ENCODE measurements at regions of chr3 and their contacts with region 1.

Region 1: DNA sequence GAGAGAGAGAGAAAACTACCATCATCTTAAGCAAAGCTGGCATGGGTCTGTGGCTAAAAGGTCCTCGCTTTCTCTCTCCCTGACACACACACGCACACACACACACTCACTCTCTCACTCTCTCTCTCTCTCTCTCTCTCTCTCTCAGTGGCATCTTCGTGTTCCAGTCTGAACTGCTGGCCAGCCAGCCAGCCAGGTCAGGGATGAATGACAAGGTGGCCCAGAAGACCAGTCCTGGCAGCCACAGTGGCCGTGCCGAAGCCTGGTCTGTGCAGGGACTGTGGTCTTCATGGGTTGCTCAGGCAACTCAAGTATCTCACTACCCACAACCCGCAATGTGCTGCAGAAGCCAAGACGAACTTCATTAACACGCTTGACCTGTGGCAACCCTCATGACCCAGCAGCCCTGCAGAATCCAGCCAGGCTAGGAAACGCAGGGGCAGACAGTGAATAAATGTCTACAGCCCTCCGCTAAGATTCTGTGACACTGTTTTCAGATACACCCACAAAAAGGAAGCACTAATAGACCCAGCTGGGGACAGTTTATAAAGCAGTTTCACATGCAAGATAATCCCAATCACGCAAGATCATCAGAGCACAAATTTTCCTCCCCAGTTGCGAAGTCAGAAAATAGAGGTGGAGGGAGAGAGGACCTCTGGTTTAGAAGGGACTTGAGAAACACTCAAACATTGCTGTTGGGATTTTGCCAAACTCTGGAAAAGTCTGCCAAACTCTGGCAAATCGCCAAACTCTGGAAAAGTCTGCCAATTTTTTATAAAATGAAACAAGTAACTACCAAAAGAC is 66.4 kb downstream of the XXYLT1 start:
- DNase-seq: peak; percentile 38
- ATAC-seq: peak; percentile 66
- H3K4me3 ChIP-seq: no peak overlapping the region
- H3K27ac ChIP-seq: peak overlapping the region; percentile 15
- H3K4me1 ChIP-seq: peaks cover 43% of the 10 kb centered on the region
- H3K27me3 ChIP-seq: no peaks in the 10 kb centered on the region
- CTCF ChIP-seq: no peak
- EP300 ChIP-seq: no peak
- POLR2A ChIP-seq: no peak
- RAD21 ChIP-seq: no peak

Region 2: DNA sequence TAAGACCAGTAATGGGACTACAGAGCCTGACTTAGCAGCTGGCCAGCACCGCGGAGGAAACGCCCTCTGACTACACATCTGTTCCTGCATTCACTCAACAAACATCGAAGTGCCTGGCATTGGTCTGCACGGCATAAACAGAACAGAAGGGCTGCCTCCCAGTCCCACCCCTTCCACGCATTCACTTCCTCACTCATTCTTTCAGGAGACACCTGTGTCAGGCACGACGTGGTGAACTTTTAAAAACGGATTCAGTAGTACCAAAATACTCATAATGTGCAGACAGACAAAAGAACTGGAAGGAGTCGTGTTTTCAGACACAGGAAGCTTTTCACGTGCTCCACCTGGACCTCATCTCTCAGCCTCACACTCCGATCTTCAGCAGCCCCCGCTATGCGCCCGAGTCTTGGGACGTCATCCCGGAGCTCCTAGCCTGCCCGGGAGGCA is 56.9 kb before region 1 on chr3:
- CTCF ChIA-PET with region 1: interaction called, 5 read pairs
- POLR2A ChIA-PET with region 1: interaction called, 13 read pairs
- RAD21 ChIA-PET with region 1: interaction called, 17 read pairs
- SMC1A ChIA-PET with region 1: interaction called, 19 read pairs
- in situ Hi-C with region 1: no loop called
- intact Hi-C with region 1: loop called (anchors 1 kb)
- DNase-seq: peak; percentile 91
- ATAC-seq: peak; percentile 83
- H3K4me3 ChIP-seq: peak overlapping the region; percentile 93
- H3K27ac ChIP-seq: peak overlapping the region; percentile 91
- H3K4me1 ChIP-seq: peaks cover 46% of the 10 kb centered on the region
- H3K27me3 ChIP-seq: no peaks in the 10 kb centered on the region
- CTCF ChIP-seq: no peak
- EP300 ChIP-seq: no peak
- POLR2A ChIP-seq: peak; percentile 79
- RAD21 ChIP-seq: no peak

Region 3: DNA sequence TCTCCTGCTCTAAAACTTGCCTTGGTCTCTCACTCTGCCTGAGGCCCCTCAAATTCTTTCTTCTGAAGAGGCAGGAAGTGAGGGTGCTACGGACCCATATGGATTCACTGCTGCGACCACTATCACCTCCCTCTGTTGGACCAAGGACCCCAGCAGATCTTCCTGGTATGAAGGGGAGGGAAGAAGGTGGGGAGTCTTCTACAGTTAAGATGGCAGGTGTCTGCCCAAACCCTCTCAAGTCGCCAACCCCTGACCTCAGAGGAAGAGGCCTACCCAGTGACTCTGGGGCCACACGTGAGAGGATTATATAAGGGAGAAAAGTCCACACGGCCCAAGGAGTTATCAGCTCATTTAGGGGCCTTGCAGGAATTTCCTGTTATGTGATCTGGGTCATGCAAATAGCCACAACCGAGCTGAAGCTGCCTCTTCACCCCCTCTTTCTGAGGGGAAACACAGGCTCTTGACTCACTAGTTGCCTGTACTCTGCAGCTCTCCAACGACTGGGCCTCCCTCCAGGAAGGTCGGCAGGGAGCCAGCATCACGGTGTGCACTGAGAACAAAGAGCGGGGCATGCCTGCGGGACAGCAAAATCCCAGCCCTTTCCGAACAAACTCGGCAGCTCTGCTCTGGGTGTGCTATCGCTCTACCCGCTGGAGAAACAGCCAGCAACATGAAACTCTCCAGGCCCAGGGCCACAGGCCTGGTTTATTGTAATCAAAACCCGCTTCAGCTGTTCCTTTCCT is 49.6 kb before region 1 on chr3:
- CTCF ChIA-PET with region 1: interaction called, 5 read pairs
- POLR2A ChIA-PET with region 1: interaction called, 13 read pairs
- RAD21 ChIA-PET with region 1: interaction called, 17 read pairs
- SMC1A ChIA-PET with region 1: interaction called, 13 read pairs
- in situ Hi-C with region 1: no loop called
- intact Hi-C with region 1: loop called (anchors 1 kb)
- DNase-seq: no peak
- ATAC-seq: peak; percentile 7; the same call in 1 of the 3 replicates
- H3K4me3 ChIP-seq: 0 out of 2 replicates have a peak overlapping the region, but pooled peaks have one; percentile 12
- H3K27ac ChIP-seq: peak overlapping the region; percentile 73
- H3K4me1 ChIP-seq: peaks cover 44% of the 10 kb centered on the region
- H3K27me3 ChIP-seq: no peaks in the 10 kb centered on the region
- CTCF ChIP-seq: no peak
- EP300 ChIP-seq: no peak
- POLR2A ChIP-seq: peak; percentile 54
- RAD21 ChIP-seq: peak; percentile 8; the same call in 1 of the 2 replicates

Region 4: GRCh38 chr3:195187609-195188425 is 16.7 kb before region 1 on chr3:
- CTCF ChIA-PET with region 1: interaction called, 4 read pairs
- POLR2A ChIA-PET with region 1: interaction called, 8 read pairs
- RAD21 ChIA-PET with region 1: interaction called, 7 read pairs
- SMC1A ChIA-PET with region 1: interaction called, 24 read pairs
- in situ Hi-C with region 1: no loop called
- intact Hi-C with region 1: no loop called
- DNase-seq: no peak
- ATAC-seq: no peak
- H3K4me3 ChIP-seq: no peak overlapping the region
- H3K27ac ChIP-seq: no peak overlapping the region
- H3K4me1 ChIP-seq: peaks cover 6% of the 10 kb centered on the region
- H3K27me3 ChIP-seq: no peaks in the 10 kb centered on the region
- CTCF ChIP-seq: no peak
- EP300 ChIP-seq: no peak
- POLR2A ChIP-seq: no peak
- RAD21 ChIP-seq: no peak

Region 5: DNA sequence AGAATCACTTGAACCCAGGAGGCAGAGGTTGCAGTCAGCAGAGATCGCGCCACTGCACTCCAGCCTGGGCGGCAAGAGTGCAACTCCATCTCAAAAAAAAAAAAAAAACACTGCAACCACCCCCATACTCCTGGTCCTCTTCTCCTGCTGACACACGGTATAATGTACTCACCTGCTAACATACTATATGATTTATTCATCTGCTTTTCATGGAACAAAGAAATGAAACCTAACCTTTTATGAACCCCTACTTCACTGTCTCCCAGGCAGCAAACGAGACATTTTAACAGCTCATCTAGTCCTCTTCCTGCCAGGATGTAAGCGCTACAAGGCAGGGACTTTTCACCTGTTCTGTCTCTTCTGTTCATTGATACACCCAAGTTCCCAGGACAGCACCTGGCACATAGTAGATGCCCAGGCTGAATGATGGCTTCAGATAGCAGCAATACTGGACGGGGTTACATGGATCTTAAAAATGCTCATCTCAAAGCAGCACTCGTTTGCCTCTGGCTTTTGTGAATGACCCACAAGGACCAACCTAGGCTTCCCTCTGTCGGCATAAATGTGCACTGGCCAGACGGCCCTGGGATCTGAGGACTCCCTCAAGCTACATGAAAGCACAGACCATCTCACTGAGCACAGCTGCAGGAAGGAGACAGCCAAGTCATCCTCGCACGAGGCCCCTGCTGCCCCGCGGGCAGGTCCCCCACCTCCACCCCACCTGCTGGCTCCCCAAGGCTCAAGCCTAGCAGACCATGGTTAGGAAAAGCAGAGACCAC is 46.1 kb after region 1 on chr3:
- CTCF ChIA-PET with region 1: interaction called, 6 read pairs
- POLR2A ChIA-PET with region 1: interaction called, 8 read pairs
- RAD21 ChIA-PET with region 1: interaction called, 42 read pairs
- SMC1A ChIA-PET with region 1: interaction called, 32 read pairs
- in situ Hi-C with region 1: no loop called
- intact Hi-C with region 1: no loop called
- DNase-seq: no peak
- ATAC-seq: peak; percentile 76
- H3K4me3 ChIP-seq: no peak overlapping the region
- H3K27ac ChIP-seq: peak overlapping the region; percentile 23
- H3K4me1 ChIP-seq: peaks cover 25% of the 10 kb centered on the region
- H3K27me3 ChIP-seq: no peaks in the 10 kb centered on the region
- CTCF ChIP-seq: peak; percentile 39 to 60 (median 42); a peak in 5 of 6 replicates
- EP300 ChIP-seq: no peak
- POLR2A ChIP-seq: no peak
- RAD21 ChIP-seq: peak; percentile 55

Measured in GM12878 (cell line).